ENCODE measurements at regions of chr11 and their contacts with region 1.

Region 1: GRCh38 chr11:100789500-100789899 is 102.4 kb downstream of the ARHGAP42 start:
- DNase-seq: peak; percentile 76

Region 2: GRCh38 chr11:100676901-100677300 is 112.6 kb before region 1 on chr11:
- intact Hi-C with region 1: no loop called
- DNase-seq: no peak

Region 3: GRCh38 chr11:100687630-100688395 is 101.7 kb before region 1 on chr11:
- intact Hi-C with region 1: loop called (anchors 5 kb)
- DNase-seq: no peak

Region 4: DNA sequence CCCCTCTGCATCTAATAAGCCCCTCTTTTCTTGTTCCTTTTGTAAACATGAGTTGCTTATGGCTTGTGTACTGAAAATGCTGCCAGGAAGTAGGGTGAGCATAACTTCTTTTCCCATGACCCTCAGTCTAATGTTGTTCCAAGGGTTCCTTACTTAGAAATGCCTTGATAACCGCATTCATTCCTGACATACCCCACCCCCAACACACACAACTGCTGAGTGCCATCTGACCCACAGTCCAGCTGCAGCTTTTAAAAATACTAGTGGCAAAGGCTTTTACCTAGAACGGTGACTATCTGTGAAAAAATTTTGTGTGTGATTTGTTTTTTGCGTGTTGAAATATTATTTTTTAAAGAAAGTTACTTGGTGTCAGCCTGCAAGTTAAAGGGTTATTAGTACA is 49.8 kb before region 1 on chr11:
- intact Hi-C with region 1: loop called (anchors 5 kb)
- DNase-seq: no peak

Region 5: DNA sequence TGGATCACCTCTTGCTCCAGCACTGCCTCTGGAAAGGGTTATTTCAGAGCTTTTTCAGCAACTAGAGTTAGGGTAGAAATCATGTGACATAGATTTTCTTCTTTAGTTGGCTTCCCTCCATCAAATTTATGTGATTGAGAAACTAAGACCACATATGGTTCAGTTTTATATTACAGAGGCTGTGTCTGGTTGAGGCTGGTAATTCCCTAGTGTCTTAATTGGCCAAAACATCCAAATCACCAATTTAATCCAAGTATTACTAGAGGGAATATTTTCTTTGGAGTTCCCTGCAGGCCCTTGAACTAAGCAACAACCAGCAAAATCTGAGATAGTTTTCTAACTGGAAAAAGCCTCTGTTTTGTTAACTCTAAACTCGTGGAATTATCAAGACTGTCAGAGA is 33.9 kb after region 1 on chr11:
- intact Hi-C with region 1: loop called (anchors 5 kb)
- DNase-seq: no peak

Measured in cardiac septum (tissue), 1 donor.